PC-9 (cell line): ENCODE measurements at regions of chr2 and their contacts with region 1.

Region 1: DNA sequence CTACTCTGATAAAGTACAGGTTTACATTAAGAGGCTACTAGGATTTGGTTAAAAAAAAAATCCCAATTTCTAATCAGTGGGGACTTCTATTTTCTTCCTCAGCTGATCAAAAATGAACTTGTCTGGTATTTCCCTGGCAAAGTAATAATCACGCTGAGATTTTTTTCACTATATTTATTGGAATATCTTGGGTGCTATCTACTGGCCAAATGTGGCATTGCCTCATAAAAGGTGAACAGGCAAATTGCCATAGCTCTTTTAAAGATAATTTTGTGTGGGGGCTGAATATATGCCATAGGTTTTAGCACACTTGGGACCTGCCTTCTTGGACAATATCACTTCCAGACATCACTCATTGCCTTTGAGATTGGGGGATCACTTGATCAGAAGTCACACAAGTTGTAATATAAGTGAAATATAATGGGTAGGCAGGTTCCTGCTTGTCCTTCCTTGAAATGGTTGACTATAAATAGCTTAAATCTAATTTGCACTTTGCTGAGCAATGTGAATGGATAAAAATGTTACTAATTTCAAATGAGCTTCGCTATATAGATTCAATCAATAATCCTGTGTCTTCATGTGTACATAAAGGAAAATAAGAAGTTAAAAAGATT is 7.0 kb upstream of the NXPH2 start:
- DNase-seq: peak in 1 of 2 experiments; percentile 14
- H3K4me3 ChIP-seq: no peak overlapping the region
- H3K27ac ChIP-seq: no peak overlapping the region
- H3K4me1 ChIP-seq: no peaks in the 10 kb centered on the region
- H3K27me3 ChIP-seq: no peaks in the 10 kb centered on the region
- CTCF ChIP-seq: peak; percentile 82

Region 2: DNA sequence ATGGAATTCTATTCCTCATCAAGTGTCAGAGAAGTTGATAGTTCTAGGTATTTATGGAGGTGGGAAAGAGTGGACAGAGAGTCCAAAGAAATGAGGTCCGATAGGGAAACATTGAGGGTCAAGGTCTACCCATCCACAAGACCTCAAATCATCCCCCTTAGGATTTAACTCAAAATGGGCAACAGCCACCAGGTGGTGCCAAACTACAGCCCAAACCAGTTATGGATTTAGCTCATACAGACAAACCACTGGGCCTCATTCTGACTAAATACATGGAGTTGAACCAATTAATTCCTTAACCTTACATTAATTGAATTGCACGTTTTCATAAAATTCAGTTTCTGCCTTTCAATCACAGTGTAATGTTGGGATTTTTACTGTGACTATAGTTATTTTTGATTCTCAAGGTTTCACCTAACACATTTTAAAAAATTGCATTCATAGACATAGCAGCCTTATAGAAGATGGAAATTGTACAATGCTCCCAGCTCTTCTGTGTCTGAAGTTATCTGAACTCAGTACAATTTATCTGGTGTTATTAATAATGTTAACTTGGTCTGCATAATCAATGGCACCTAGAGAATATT is 921.1 kb before region 1 on chr2:
- CTCF ChIA-PET with region 1: interaction called, 5 read pairs
- POLR2A ChIA-PET with region 1: no interaction called
- intact Hi-C with region 1: loop called (anchors 1 kb)
- DNase-seq: peak in 1 of 2 experiments; percentile 48
- H3K4me3 ChIP-seq: no peak overlapping the region
- H3K27ac ChIP-seq: no peak overlapping the region
- H3K4me1 ChIP-seq: no peaks in the 10 kb centered on the region
- H3K27me3 ChIP-seq: no peaks in the 10 kb centered on the region
- CTCF ChIP-seq: peak; percentile 73

Region 3: GRCh38 chr2:137910641-137911040 is 876.5 kb before region 1 on chr2:
- CTCF ChIA-PET with region 1: interaction called, 3 read pairs
- POLR2A ChIA-PET with region 1: no interaction called
- intact Hi-C with region 1: loop called (anchors 1 kb)
- DNase-seq: no peak
- H3K4me3 ChIP-seq: no peak overlapping the region
- H3K27ac ChIP-seq: no peak overlapping the region
- H3K4me1 ChIP-seq: no peaks in the 10 kb centered on the region
- H3K27me3 ChIP-seq: no peaks in the 10 kb centered on the region
- CTCF ChIP-seq: peak; percentile 81

Region 4: DNA sequence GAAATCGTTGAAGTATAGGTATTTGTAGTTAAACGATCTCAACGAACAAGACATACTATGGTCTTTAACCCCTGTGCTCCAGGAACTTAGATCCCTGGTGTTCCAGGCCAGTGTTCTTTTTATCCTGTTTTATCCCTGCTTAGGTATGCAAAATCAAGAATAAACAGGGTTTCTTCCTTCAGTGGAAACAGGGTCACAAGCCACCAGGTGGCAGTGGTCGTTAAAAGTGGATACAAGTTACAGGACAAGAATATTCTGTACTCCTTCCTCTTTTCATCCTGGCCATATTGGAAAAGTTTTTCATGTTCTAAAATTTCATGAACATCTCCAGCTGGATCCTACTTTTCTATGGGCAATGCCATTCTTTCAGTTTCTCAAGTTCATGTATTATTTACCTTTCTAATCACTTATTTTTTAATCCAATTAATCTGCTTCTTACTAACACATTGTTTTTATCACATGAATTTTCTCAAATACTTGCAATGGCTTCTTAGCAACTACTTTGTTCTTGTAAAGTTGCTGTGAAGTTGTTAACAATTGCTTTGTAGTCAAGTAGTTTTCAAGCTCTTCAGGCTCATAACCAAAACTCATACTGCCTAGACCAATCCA is 839.3 kb before region 1 on chr2:
- CTCF ChIA-PET with region 1: no interaction called
- POLR2A ChIA-PET with region 1: no interaction called
- intact Hi-C with region 1: loop called (anchors 1 kb)
- DNase-seq: peak; percentile 51 to 59
- H3K4me3 ChIP-seq: no peak overlapping the region
- H3K27ac ChIP-seq: no peak overlapping the region
- H3K4me1 ChIP-seq: peaks cover 1% of the 10 kb centered on the region; the same call in 1 of the 2 replicates
- H3K27me3 ChIP-seq: no peaks in the 10 kb centered on the region
- CTCF ChIP-seq: peak; percentile 81

Region 5: GRCh38 chr2:138421315-138422301 is 365.6 kb before region 1 on chr2:
- CTCF ChIA-PET with region 1: no interaction called
- POLR2A ChIA-PET with region 1: interaction called, 11 read pairs
- intact Hi-C with region 1: no loop called
- DNase-seq: peak; percentile 27 to 80
- H3K4me3 ChIP-seq: no peak overlapping the region
- H3K27ac ChIP-seq: peak overlapping the region; percentile 73
- H3K4me1 ChIP-seq: peaks cover 11% of the 10 kb centered on the region
- H3K27me3 ChIP-seq: no peaks in the 10 kb centered on the region
- CTCF ChIP-seq: no peak